CD4-positive, alpha-beta memory T cell (primary cell): ENCODE measurements at regions of chr17 and their contacts with region 1.

Region 1: GRCh38 chr17:77476931-77477877 is 336.4 kb downstream of the SEC14L1 start:
- DNase-seq: peak in 1 of 5 donors; percentile 43
- H3K4me3 ChIP-seq: no peak overlapping the region
- H3K4me3 Mint-ChIP-seq: peak overlapping the region in 6 of 8 donors; percentile 33 to 75 (median 55)
- H3K27ac ChIP-seq: peak overlapping the region; percentile 30
- H3K27ac Mint-ChIP-seq: peak overlapping the region; percentile 74 to 94 (median 87)
- H3K4me1 ChIP-seq: peaks cover 99% of the 10 kb centered on the region
- H3K4me1 Mint-ChIP-seq: peaks cover 57 to 83% (median 69%) of the 10 kb centered on the region in 4 donors
- H3K27me3 ChIP-seq: no peaks in the 10 kb centered on the region
- H3K27me3 Mint-ChIP-seq: no peaks in the 10 kb centered on the region

Region 2: GRCh38 chr17:77451245-77451893 is 25.8 kb before region 1 on chr17:
- CTCF ChIA-PET with region 1: interaction called, 6 read pairs
- POLR2A ChIA-PET with region 1: interaction called, 221 read pairs
- intact Hi-C with region 1: no loop called
- DNase-seq: peak; percentile 65 to 83 (median 73)
- H3K4me3 ChIP-seq: peak overlapping the region; percentile 94 to 96
- H3K4me3 Mint-ChIP-seq: peak overlapping the region; percentile 90 to 100 (median 96)
- H3K27ac ChIP-seq: peak overlapping the region; percentile 73
- H3K27ac Mint-ChIP-seq: peak overlapping the region; percentile 81 to 100 (median 98)
- H3K4me1 ChIP-seq: peaks cover 61% of the 10 kb centered on the region
- H3K4me1 Mint-ChIP-seq: peaks cover 25 to 91% (median 45%) of the 10 kb centered on the region in 4 donors
- H3K27me3 ChIP-seq: no peaks in the 10 kb centered on the region
- H3K27me3 Mint-ChIP-seq: no peaks in the 10 kb centered on the region

Region 3: DNA sequence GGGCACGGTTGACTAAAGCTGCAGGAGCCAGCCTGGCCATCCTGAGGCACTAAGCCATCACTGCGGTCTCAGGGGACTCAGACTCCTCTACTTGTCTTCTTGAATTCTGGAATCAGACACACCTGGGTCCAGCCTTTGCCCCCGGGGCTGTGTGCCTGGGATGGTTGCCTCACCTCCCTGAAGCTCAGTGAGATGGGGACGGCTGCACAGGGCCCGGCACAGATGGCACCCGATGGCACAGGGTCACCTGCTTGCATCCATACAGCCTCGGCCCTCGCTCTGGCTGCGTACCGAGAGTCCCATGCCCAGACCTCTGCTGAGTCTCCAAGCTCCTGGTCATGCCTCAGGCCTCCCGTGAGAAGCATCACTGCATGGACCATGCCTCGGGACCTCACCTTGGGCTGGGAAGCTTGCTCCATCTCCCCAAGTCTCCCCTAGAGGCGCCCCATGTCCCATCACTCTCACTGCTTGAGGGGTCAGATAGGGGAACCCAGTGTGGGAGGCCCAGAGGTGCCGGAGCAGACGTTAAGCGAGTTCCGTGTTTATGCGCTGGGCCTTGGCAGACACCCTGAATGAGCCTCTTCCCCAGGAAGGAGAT is 20.2 kb before region 1 on chr17:
- CTCF ChIA-PET with region 1: interaction called, 6 read pairs
- POLR2A ChIA-PET with region 1: interaction called, 221 read pairs
- intact Hi-C with region 1: loop called (anchors 2 kb)
- DNase-seq: peak in 1 of 5 donors; percentile 64
- H3K4me3 ChIP-seq: peak overlapping the region; percentile 73 to 94
- H3K4me3 Mint-ChIP-seq: peak overlapping the region; percentile 90 to 100 (median 96)
- H3K27ac ChIP-seq: peak overlapping the region; percentile 73
- H3K27ac Mint-ChIP-seq: peak overlapping the region; percentile 90 to 100 (median 98)
- H3K4me1 ChIP-seq: peaks cover 74% of the 10 kb centered on the region
- H3K4me1 Mint-ChIP-seq: peaks cover 31 to 92% (median 55%) of the 10 kb centered on the region in 4 donors
- H3K27me3 ChIP-seq: no peaks in the 10 kb centered on the region
- H3K27me3 Mint-ChIP-seq: no peaks in the 10 kb centered on the region

Region 4: DNA sequence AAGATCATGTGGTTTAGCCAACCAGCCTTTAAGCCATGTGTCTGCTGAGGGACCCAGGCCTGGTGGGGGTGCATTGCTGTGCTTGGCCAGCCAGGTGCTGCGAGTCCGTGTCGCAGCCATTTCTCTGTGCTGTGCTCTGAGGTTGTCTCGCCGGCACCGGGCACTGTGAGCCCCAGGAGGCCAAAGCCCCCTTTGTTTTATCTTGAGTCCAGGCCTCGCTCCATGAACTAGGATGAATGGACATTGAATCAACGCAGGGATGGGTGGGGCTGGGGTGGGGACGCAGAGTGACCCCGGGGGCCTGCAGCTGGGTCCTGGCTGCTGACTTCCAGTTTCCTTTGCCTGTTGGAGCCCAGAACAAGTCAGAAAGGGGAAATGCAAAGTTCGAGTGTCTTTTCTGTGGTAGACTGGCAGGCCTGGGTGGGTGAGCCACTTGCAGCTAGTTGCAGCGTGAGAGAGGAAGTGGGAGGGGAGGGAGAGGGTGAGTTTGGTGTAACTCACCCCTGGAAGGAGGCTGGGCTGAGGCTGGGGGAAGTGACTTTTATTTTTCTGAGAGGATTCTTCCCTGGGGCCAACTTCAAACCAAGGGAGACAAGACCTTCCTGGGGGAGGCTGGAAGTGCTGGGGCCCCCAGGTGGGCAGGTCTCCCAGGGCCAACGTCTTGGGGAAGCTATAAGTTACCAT is 11.7 kb before region 1 on chr17:
- CTCF ChIA-PET with region 1: interaction called, 5 read pairs
- POLR2A ChIA-PET with region 1: interaction called, 221 read pairs
- intact Hi-C with region 1: loop called (anchors 1 kb)
- DNase-seq: peak; percentile 82 to 94 (median 84)
- H3K4me3 ChIP-seq: peak overlapping the region; percentile 6 to 47
- H3K4me3 Mint-ChIP-seq: peak overlapping the region; percentile 80 to 90 (median 84)
- H3K27ac ChIP-seq: peak overlapping the region; percentile 50
- H3K27ac Mint-ChIP-seq: peak overlapping the region; percentile 83 to 97 (median 85)
- H3K4me1 ChIP-seq: peaks cover 99% of the 10 kb centered on the region
- H3K4me1 Mint-ChIP-seq: peaks cover 60 to 95% (median 79%) of the 10 kb centered on the region in 4 donors
- H3K27me3 ChIP-seq: no peaks in the 10 kb centered on the region
- H3K27me3 Mint-ChIP-seq: no peaks in the 10 kb centered on the region

Region 5: GRCh38 chr17:77542551-77543490 is 65.6 kb after region 1 on chr17:
- CTCF ChIA-PET with region 1: no interaction called
- POLR2A ChIA-PET with region 1: no interaction called
- intact Hi-C with region 1: no loop called
- DNase-seq: peak; percentile 49 to 60 (median 57)
- H3K4me3 ChIP-seq: no peak overlapping the region
- H3K4me3 Mint-ChIP-seq: no peak overlapping the region
- H3K27ac ChIP-seq: no peak overlapping the region
- H3K27ac Mint-ChIP-seq: peak overlapping the region in 1 of 7 donors; percentile 9
- H3K4me1 ChIP-seq: no peaks in the 10 kb centered on the region
- H3K4me1 Mint-ChIP-seq: no peaks in the 10 kb centered on the region
- H3K27me3 ChIP-seq: peaks cover 7% of the 10 kb centered on the region
- H3K27me3 Mint-ChIP-seq: peaks cover 3 to 14% of the 10 kb centered on the region in 2 donors

Region 6: DNA sequence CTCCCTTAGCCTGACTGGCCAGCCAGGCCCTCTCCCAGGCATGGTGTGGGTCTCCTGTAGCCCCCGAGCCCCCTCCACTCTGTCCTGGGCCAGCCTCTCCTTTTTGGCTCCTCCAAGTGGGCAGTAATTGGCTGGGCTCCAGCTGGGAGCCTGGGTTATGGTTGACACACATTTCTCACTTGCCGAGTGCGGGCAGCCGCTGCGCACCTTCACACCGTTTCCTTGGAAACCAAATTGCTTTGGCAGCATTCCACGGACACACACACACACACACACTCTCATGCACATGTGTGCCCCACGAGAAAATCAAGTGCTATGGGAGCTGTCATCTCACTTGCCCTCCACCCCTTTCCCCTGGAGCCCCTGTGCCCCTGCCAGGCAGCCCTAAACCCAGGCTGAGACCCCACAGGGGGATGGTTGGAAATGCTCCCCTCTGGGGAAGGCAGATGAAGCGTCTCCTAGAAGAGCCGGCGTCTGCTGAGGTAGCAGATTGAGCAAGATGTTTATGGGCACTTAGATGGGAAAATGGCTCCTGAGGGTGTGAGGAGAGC is 78.6 kb after region 1 on chr17:
- CTCF ChIA-PET with region 1: no interaction called
- POLR2A ChIA-PET with region 1: no interaction called
- intact Hi-C with region 1: no loop called
- DNase-seq: peak in 1 of 5 donors; percentile 6
- H3K4me3 ChIP-seq: no peak overlapping the region
- H3K4me3 Mint-ChIP-seq: no peak overlapping the region
- H3K27ac ChIP-seq: no peak overlapping the region
- H3K27ac Mint-ChIP-seq: no peak overlapping the region
- H3K4me1 ChIP-seq: no peaks in the 10 kb centered on the region
- H3K4me1 Mint-ChIP-seq: peaks cover 0 to 1% (median 0%) of the 10 kb centered on the region in 4 donors
- H3K27me3 ChIP-seq: no peaks in the 10 kb centered on the region
- H3K27me3 Mint-ChIP-seq: peaks cover 5 to 6% of the 10 kb centered on the region in 2 donors

Region 7: GRCh38 chr17:77628035-77628434 is 150.8 kb after region 1 on chr17:
- CTCF ChIA-PET with region 1: no interaction called
- POLR2A ChIA-PET with region 1: no interaction called
- intact Hi-C with region 1: no loop called
- DNase-seq: no peak
- H3K4me3 ChIP-seq: no peak overlapping the region
- H3K4me3 Mint-ChIP-seq: no peak overlapping the region
- H3K27ac ChIP-seq: no peak overlapping the region
- H3K27ac Mint-ChIP-seq: no peak overlapping the region
- H3K4me1 ChIP-seq: no peaks in the 10 kb centered on the region
- H3K4me1 Mint-ChIP-seq: no peaks in the 10 kb centered on the region
- H3K27me3 ChIP-seq: no peaks in the 10 kb centered on the region
- H3K27me3 Mint-ChIP-seq: peaks cover 3 to 7% of the 10 kb centered on the region in 2 donors

Region 8: GRCh38 chr17:79009397-79010308 is 1532.4 kb after region 1 on chr17 and contains the start of gene CANT1:
- CTCF ChIA-PET with region 1: no interaction called
- POLR2A ChIA-PET with region 1: no interaction called
- intact Hi-C with region 1: no loop called
- DNase-seq: peak; percentile 79 to 88 (median 87)
- H3K4me3 ChIP-seq: peak within 1 kb of the TSS; percentile 91
- H3K4me3 Mint-ChIP-seq: peak within 1 kb of the TSS; percentile 89 to 96 (median 94)
- H3K27ac ChIP-seq: peak within 1 kb of the TSS; percentile 86
- H3K27ac Mint-ChIP-seq: peak within 1 kb of the TSS; percentile 94 to 98 (median 98)
- H3K4me1 ChIP-seq: peaks cover 50% of the 10 kb centered on the region
- H3K4me1 Mint-ChIP-seq: peaks cover 31 to 57% (median 44%) of the 10 kb centered on the region in 4 donors
- H3K27me3 ChIP-seq: no peaks in the 10 kb centered on the region
- H3K27me3 Mint-ChIP-seq: peaks cover 0 to 2% of the 10 kb centered on the region in 2 donors
- total RNA-seq, gene CANT1: 57.9 to 59.4 TPM